OCI-LY7 (cell line): ENCODE measurements at regions of chr22 and their contacts with region 1.

Region 1: DNA sequence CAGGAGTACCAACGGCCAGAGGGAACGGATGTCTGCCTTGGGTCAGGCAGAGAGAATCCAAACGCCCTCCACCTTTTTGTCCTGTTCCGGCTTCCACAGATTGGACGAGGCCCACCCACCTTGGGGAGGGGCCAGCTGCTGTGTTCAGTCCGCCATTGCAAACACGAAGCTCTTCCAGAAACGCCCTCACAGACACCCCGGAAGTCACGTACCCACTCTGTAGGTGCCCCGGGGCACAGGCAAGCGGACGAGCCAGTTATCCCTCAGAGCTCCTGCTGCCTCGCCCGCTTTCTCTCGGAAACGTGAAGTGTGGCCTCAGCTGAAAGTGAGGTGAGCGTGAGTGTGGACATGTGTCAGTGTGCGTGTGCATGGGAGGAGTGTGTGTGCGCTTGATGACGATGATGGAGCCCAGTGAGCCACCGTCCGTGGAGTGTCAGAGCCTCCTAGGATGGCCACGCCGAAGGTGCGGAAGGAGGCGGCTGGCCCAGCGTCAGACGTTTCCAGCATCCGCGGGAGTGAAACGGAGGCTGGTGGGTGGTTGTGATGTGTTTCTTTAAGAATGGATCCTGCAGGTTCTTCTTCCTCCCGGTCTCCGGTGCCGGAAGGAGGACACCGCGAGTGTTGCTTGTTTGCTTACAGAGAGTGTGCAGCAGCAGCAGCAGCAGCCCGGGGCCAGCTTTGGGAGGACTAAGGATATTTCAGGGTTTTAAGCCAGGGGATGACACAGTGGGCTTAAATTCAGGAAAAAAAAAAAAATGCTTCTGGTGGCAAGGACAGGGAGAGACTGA is 869.3 kb downstream of the TBC1D22A start:
- DNase-seq: no peak
- H3K4me3 ChIP-seq: no peak overlapping the region
- H3K27ac ChIP-seq: no peak overlapping the region
- H3K4me1 ChIP-seq: no peaks in the 10 kb centered on the region
- CTCF ChIP-seq: no peak

Region 2: DNA sequence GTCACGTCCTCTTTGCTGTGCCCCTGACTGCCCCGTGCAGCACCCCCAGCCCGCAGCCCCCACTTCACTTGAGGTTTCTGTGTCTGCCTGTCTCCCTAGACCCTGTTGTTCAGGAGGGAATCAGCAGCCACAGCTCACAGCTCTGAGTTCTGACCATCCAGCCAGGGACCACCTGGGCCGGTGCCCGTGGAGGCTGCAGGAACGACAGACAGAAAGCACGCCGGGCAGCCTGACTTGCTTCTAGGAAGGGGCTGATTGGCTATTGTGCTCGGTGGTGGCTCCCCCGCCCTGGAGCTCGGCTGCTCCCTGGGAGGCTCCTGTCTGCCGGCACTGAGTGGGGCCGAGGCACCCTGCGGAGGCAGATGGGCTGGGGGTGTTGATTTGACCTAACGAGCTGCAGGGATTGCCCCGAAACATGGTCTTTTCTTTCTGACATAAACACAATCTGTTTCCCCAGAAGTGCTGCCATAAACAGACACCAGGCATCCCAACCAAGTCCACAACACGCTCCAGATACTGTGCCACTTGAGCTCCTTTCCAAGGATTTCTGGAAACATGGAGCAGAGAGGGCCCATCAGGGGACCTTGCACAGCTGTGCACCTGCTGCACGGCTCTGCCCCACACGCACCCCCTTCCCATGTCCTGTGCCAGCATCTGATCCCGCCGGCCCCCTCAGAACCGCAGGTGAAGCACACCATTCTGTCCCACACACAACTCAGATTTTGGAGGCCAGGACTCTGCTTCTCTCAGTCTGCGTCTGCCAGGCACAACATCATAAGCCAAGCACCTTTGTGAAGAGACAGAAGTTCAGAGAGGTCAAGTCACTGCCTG is 13.4 kb before region 1 on chr22:
- CTCF ChIA-PET with region 1: no interaction called
- POLR2A ChIA-PET with region 1: no interaction called
- intact Hi-C with region 1: no loop called
- DNase-seq: no peak
- H3K4me3 ChIP-seq: no peak overlapping the region
- H3K27ac ChIP-seq: no peak overlapping the region
- H3K4me1 ChIP-seq: no peaks in the 10 kb centered on the region
- CTCF ChIP-seq: no peak

Region 3: GRCh38 chr22:47695176-47695575 is 63.4 kb after region 1 on chr22:
- CTCF ChIA-PET with region 1: no interaction called
- POLR2A ChIA-PET with region 1: no interaction called
- intact Hi-C with region 1: no loop called
- DNase-seq: no peak
- H3K4me3 ChIP-seq: no peak overlapping the region
- H3K27ac ChIP-seq: no peak overlapping the region
- H3K4me1 ChIP-seq: no peaks in the 10 kb centered on the region
- CTCF ChIP-seq: no peak

Region 4: GRCh38 chr22:47837703-47838102 is 206.0 kb after region 1 on chr22:
- CTCF ChIA-PET with region 1: no interaction called
- POLR2A ChIA-PET with region 1: no interaction called
- intact Hi-C with region 1: loop called (anchors 10 kb)
- DNase-seq: peak; percentile 65
- H3K4me3 ChIP-seq: no peak overlapping the region
- H3K27ac ChIP-seq: no peak overlapping the region
- H3K4me1 ChIP-seq: peaks cover 28% of the 10 kb centered on the region
- CTCF ChIP-seq: peak; percentile 86